Dendritic cell treated with granulocyte-macrophage colony-stimulating factor and Interleukin-4, amounts not matched to agents 40 ng/mL and 50 ng/mL, for 4 days (primary cell): ENCODE measurements at regions of chr11 and their contacts with region 1.

Region 1: GRCh38 chr11:129989149-129989813 is 13.4 kb downstream of the PRDM10 start:
- H3K4me3 Mint-ChIP-seq: no peak overlapping the region
- H3K27ac Mint-ChIP-seq: no peak overlapping the region
- H3K4me1 Mint-ChIP-seq: peaks cover 6% of the 10 kb centered on the region
- H3K27me3 Mint-ChIP-seq: no peaks in the 10 kb centered on the region

Region 2: GRCh38 chr11:129930296-129930695 is 59.0 kb before region 1 on chr11:
- intact Hi-C with region 1: loop called (anchors 10 kb)
- H3K4me3 Mint-ChIP-seq: no peak overlapping the region
- H3K27ac Mint-ChIP-seq: no peak overlapping the region
- H3K4me1 Mint-ChIP-seq: peaks cover 27% of the 10 kb centered on the region
- H3K27me3 Mint-ChIP-seq: no peaks in the 10 kb centered on the region